HCT116 (cell line): ENCODE measurements at regions of chr19 and their contacts with region 1.

Region 1: DNA sequence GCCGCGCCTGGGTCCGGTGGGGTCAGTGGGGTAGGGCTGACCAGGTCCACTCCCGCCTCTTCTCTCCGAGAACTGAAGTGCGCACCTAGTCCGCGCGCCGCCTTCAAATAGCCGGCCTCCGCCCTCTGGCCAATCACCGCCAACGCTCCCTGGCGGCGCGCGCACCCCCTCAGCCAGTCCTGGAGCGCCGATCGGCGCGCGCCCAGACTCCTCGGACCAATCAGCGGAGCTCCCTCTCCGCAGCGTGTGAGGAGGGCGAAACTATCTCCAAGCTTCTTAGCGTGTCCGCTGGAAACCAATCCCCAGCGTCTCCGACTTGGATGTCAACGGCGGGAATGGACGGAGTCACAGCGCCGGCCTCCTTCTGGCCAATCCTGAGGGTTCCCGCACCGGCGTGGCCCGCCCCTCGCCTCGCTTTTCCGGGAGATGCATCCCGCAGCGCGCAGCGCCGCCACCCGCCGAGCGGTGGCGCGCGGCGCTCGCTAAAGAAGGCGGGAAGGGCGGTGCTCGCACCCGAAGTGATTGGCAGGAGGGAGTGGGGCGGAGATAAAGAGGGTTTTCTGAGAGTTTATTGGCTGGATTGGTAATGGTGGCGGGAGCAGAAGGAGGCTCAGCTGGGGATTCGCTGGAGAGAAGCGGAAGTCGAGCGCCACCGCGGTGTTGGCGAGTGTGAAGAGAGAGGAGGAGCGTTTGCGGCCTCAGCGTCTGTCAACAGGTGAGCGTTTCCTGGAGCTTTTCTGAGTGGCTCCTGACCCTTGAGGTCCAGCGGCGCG is at the start of gene ASF1B:
- DNase-seq: peak; percentile 100
- ATAC-seq: peak; percentile 86
- H3K4me3 ChIP-seq: peak within 1 kb of the TSS; percentile 84 to 87
- H3K27ac ChIP-seq: peak within 1 kb of the TSS; percentile 92
- H3K4me1 ChIP-seq: peaks cover 13 to 32% of the 10 kb centered on the region in 2 experiments
- H3K27me3 ChIP-seq: no peaks in the 10 kb centered on the region
- CTCF ChIP-seq: peak; percentile 51 to 94 (median 70); a peak in 5 of 6 replicates
- POLR2A ChIP-seq: peak; percentile 92
- RAD21 ChIP-seq: peak; percentile 98
- total RNA-seq, gene ASF1B: 78.1 TPM

Region 2: DNA sequence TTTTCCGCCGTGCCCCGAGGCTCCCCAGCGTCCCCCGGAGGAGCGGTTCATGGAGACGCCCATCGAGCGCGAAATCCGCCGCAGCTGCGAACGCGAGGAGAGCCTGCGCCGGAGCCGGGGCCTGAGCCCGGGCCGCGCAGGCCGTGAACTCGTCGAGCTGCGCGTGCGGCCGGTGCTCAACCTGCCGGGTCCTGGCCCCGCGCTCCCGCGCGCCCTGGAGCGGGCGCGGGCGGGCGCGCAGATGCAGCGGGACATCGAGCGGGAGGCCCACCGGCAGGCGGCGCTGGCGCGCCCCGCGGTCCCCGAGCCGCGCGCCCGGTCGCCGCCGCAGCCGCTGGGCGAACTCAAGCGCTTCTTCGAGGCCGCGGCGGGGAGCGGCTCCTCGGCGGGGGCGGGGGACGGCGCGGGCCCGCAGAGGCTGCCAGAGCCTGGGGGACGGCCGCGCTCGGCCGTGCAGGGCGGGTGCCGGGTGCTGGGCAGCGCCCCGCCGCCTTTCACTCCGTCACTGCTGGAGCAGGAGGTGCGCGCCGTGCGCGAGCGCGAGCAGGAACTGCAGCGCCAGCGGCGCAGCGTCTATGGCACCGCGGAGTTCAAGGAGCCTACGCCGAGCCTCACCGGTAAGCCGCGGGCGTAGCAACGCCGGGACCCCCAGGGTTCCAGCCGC is 63.3 kb before region 1 on chr19:
- CTCF ChIA-PET with region 1: interaction called, 15 read pairs
- POLR2A ChIA-PET with region 1: interaction called, 3 read pairs
- RAD21 ChIA-PET with region 1: no interaction called
- intact Hi-C with region 1: no loop called
- DNase-seq: no peak
- ATAC-seq: peak; percentile 64
- H3K4me3 ChIP-seq: peak overlapping the region; percentile 66 to 72
- H3K27ac ChIP-seq: peak overlapping the region; percentile 80
- H3K4me1 ChIP-seq: peaks cover 17 to 41% of the 10 kb centered on the region in 2 experiments
- H3K27me3 ChIP-seq: no peaks in the 10 kb centered on the region
- CTCF ChIP-seq: peak in 2 of 3 experiments; percentile 19 to 22; a peak in 2 of 6 replicates
- POLR2A ChIP-seq: no peak
- RAD21 ChIP-seq: no peak

Region 3: DNA sequence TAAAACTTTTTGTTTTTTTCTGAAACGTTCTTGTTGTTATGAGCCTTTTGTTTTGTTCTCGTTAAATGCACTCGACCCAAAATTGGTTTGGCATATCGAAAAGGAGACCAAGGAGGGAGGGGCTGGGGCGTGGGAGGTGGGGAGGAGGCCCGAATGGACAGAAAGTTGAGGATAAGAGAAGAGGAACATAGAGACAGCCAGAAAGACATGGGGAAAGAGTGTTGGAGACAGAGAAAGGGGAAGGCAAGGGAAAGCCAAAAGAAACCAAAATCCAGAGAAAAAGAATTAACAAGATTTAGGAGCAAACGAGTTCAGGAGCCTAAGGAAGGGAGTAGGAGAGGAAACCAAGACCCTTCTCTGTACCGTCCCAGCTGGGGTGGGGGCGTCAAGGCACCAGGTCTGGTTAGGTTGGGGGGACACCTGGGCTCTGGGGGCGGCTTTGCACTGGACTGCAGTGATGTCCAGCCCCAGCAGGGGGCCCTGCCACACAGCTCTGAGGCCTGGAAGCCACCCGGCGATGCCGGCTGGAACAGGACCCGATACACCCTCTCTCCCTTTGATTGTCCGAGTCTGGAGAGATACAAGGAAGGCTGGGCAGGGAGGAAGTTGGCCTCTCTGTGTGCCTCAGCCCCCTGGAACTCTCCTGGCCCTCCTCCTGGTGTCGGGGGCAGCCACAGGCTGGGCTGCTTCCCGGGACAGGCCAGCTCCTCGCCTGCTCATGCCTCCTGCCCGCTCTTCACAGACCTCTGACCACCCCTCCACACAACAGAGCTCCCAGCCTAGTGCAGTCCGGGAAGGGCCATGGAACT is 11.3 kb after region 1 on chr19:
- CTCF ChIA-PET with region 1: interaction called, 15 read pairs
- POLR2A ChIA-PET with region 1: interaction called, 12 read pairs
- RAD21 ChIA-PET with region 1: no interaction called
- intact Hi-C with region 1: no loop called
- DNase-seq: peak; percentile 36
- ATAC-seq: peak; percentile 88
- H3K4me3 ChIP-seq: no peak overlapping the region
- H3K27ac ChIP-seq: peak overlapping the region; percentile 28; the same call in 1 of the 2 replicates
- H3K4me1 ChIP-seq: peaks cover 5 to 15% of the 10 kb centered on the region in 2 experiments; a peak in 3 of 4 replicates
- H3K27me3 ChIP-seq: no peaks in the 10 kb centered on the region
- CTCF ChIP-seq: peak; percentile 74 to 89 (median 80)
- POLR2A ChIP-seq: no peak
- RAD21 ChIP-seq: peak; percentile 73

Region 4: DNA sequence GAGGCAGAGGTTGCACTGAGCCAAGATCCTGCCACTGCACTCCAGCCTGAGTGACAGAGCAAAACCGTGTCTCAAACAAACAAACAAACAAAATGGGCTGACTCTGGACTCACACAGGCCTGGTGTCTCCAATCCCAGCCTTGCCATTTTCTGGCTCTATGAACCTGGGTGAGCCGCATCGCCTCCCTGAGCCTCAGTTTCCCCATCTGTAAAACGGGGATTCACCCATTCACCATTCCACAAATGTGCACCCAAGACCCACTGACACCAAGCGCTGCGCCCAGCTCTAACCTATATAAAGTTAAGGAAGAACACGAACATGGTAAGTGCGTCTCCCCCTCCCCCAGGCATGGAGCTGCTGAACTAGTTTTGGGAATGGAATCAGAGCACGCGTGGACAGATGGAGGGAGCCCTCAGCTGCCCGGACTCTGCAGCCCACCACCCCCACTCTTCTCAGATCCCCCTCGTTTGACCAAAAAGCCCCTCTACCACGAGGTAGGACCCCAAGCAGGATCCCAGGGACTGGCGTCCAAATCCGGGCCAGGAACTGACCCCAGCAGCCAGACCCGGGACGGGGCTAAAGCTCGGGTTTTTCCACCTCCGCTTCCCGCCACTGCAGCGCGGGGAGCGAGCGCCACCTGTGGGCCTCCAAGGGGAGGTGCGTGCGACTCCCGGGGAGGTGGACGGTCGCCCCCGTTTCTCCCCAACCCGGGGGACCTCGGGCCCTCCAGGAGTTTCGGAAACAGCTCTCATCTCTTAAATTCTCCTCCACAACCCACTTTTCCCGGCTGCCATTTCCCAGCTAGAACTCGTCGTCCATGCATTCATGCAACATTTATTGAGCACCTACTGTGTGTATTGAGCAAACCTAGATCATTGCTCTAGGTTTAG is 211.5 kb after region 1 on chr19:
- CTCF ChIA-PET with region 1: interaction called, 15 read pairs
- POLR2A ChIA-PET with region 1: no interaction called
- RAD21 ChIA-PET with region 1: interaction called, 9 to 13 read pairs
- intact Hi-C with region 1: no loop called
- DNase-seq: no peak
- ATAC-seq: peak; percentile 82
- H3K4me3 ChIP-seq: peak overlapping the region; percentile 30 to 39
- H3K27ac ChIP-seq: peak overlapping the region; percentile 10; the same call in 1 of the 2 replicates
- H3K4me1 ChIP-seq: peaks cover 10 to 21% of the 10 kb centered on the region in 2 experiments
- H3K27me3 ChIP-seq: no peaks in the 10 kb centered on the region
- CTCF ChIP-seq: peak; percentile 96 to 98 (median 97)
- POLR2A ChIP-seq: no peak
- RAD21 ChIP-seq: peak; percentile 99

Region 5: DNA sequence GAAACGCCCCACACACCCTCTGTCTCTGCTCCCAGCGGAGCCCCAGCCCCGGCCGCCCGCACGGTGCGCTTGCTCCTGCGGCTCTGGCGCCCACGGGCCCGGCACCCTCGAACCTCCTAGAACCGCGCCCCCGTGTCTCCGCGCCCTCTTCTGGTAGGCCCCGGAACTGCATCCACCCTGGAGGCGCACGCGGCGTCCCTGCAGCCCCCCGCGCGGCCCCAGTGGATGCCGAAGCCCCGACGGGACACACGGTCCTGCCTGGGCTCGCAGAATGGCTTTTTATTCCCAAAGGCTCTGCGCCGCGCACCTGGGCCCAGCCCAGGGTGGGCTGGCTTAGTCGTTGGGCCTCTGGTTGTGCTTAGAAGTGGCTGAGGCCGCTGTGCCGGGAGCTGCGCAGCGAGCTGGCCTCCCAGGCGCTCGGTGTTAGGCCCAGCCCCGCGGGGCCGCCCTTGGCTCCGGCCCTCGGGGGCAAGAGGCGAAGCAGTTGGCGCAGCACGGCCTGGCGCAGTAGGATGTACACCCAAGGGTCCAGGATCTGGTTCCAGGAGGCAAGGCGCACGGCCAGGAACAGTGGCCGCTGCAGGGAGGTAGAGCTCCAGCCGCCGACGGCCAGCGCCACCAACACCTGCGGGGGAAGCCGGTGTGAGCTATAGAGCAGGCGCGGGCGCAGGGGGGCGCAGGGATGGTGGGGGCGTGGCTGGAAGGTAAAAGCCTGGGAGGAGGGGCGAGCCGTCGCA is 335.7 kb after region 1 on chr19:
- CTCF ChIA-PET with region 1: interaction called, 4 read pairs
- POLR2A ChIA-PET with region 1: no interaction called
- RAD21 ChIA-PET with region 1: interaction called in 1 of 2 experiments, 4 read pairs
- intact Hi-C with region 1: loop called (anchors 5 kb)
- DNase-seq: peak; percentile 22
- ATAC-seq: peak; percentile 63
- H3K4me3 ChIP-seq: no peak overlapping the region
- H3K27ac ChIP-seq: no peak overlapping the region
- H3K4me1 ChIP-seq: peaks cover 22 to 38% of the 10 kb centered on the region in 2 experiments; a peak in 3 of 4 replicates
- H3K27me3 ChIP-seq: no peaks in the 10 kb centered on the region
- CTCF ChIP-seq: peak; percentile 73 to 89 (median 88)
- POLR2A ChIP-seq: no peak
- RAD21 ChIP-seq: peak; percentile 68